Common myeloid progenitor, CD34-positive (primary cell): ENCODE measurements at regions of chr15 and their contacts with region 1.

Region 1: DNA sequence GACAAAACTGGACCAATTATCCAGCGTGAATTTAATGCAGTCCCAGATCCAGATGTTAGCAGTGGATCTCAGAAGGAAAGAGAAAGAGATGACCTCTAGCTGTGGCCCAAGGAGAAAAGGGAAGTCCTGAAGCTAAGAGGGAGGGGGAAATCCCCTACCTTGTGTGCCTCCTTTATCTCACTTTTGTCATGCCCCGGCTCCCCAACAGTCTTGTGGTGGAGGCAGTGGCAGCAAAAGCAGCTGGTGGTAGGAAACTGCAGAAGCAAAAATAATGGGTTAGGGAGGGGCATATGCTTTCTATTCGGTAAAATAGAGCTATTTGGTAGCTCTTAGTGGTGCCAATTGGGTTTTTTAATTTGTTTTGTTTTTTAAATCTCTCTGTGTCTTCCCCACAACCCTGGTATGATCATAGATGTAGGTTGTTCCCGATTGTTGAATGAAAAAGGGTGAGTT is 56.5 kb downstream of the MCTP2 start:
- DNase-seq: peak; percentile 91 to 99 (median 97)
- H3K4me3 ChIP-seq: peak overlapping the region in 6 of 7 experiments; percentile 32 to 70 (median 44)
- H3K27ac ChIP-seq: peak overlapping the region; percentile 76 to 91
- H3K4me1 ChIP-seq: peaks cover 42 to 71% (median 52%) of the 10 kb centered on the region in 4 experiments
- H3K27me3 ChIP-seq: no peaks in the 10 kb centered on the region

Region 2: DNA sequence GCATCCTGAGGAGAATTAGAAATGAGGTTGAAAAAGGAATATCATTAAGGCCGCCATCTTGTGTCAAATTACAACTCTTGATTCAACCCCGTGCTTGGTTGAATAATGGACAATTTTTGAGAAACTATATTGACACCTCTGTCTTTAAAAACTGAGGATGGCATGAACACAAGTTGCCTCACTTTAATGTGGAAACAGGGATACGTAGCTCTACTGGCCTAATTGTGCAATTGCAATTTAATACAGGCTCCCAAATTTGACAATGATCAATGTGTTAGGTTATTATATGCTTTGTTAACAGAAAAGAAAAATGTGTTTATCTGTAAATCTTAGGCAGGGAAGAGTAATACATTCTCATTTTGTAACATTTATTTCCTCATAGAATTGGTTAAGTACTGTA is 133.6 kb before region 1 on chr15:
- CTCF ChIA-PET with region 1: no interaction called
- POLR2A ChIA-PET with region 1: no interaction called
- DNase-seq: no peak
- H3K4me3 ChIP-seq: no peak overlapping the region
- H3K27ac ChIP-seq: no peak overlapping the region
- H3K4me1 ChIP-seq: no peaks in the 10 kb centered on the region
- H3K27me3 ChIP-seq: no peaks in the 10 kb centered on the region

Region 3: DNA sequence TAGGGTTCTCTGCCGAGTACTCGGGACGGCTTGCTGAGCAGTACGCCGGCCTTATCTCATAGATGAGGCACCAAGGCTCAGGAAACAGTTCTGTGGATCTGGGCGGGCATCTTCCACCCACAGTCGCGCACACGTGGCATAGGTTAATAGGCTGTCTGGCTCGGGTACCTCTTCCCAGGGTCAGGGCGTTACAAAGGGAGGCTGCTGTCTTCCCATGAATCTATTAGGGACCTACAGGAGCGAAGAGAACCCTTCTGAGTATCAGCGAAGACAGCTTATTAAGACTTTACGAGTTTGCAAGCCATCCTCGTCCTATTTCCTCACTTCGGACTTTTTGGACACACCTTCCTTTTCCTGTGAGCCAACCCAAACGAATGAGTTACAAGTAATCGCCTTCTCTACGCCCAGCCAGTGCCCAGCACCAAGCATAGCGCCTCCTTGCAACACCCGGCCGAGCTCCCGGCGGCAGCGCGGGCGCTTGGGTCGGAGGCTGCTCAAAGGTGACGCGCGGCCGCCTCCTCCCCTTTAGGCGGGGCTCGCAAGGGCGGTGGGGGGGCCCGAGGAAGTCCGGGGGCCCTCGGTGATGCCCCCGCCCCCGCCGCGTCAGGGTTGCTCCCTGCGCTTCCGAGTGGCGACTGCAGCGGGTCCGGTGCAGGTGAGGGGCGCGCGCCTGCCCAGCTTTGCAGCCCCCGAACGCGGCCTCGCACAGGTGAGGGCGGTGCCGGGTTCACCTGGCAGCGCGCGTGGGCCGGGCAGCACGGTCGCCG is 56.7 kb before region 1 on chr15 and contains the start of gene MCTP2:
- CTCF ChIA-PET with region 1: interaction called, 23 read pairs
- POLR2A ChIA-PET with region 1: interaction called, 15 read pairs
- DNase-seq: peak; percentile 92 to 97 (median 96)
- H3K4me3 ChIP-seq: peak within 1 kb of the TSS; percentile 87 to 96 (median 90)
- H3K27ac ChIP-seq: peak within 1 kb of the TSS; percentile 84 to 93
- H3K4me1 ChIP-seq: peaks cover 37 to 66% (median 58%) of the 10 kb centered on the region in 4 experiments
- H3K27me3 ChIP-seq: no peaks in the 10 kb centered on the region

Region 4: DNA sequence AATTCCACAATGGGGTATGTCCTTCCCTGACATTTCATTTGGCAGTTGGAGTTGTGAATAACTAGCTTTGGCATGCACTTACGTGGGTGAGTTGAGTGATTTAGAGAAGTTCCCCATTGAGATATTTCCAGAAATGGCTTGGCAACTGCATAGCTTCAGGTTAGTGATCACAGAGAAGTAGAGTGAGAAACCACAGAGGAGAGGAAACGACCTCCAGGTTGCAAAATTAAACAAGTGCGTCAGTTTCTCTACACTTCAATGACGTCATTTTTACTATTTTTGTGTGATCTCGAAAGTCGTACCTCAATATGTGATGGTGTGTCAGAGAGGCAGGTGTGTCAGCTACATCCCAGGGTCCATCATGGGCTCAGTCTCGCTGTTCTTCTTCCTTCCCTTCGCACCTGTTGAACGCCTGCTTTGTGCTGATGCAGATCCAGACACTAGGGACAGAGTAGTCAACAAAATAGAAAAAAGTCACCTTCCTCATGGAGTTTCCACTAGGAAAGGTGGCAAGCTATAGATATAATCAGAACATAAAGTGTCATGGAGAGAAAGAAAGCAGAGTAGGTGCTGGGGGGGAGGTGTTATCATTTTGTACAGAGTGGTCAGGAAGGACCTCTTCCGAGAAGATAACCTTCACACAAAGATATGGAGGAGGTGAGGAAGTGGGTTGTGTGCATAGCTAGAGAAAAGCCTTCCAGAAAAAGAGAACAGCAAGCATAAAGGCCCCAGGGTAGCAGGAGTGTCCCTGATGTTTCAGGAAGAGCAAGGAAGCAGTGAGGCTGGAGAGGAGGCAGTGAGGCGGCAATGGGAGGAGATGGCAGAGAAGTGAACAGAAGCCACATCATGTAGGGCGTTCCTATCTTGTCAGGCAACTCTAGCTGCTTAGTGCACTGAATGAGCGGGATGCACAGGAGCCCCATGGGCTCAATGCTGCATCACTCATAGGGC is 19.2 kb after region 1 on chr15:
- CTCF ChIA-PET with region 1: interaction called, 26 read pairs
- POLR2A ChIA-PET with region 1: interaction called, 8 read pairs
- DNase-seq: peak; percentile 71 to 93 (median 79)
- H3K4me3 ChIP-seq: peak overlapping the region in 1 of 7 experiments; percentile 21
- H3K27ac ChIP-seq: peak overlapping the region; percentile 47 to 72
- H3K4me1 ChIP-seq: peaks cover 11 to 49% (median 34%) of the 10 kb centered on the region in 4 experiments
- H3K27me3 ChIP-seq: no peaks in the 10 kb centered on the region